ENCODE measurements at regions of chr15 and their contacts with region 1.

Region 1: DNA sequence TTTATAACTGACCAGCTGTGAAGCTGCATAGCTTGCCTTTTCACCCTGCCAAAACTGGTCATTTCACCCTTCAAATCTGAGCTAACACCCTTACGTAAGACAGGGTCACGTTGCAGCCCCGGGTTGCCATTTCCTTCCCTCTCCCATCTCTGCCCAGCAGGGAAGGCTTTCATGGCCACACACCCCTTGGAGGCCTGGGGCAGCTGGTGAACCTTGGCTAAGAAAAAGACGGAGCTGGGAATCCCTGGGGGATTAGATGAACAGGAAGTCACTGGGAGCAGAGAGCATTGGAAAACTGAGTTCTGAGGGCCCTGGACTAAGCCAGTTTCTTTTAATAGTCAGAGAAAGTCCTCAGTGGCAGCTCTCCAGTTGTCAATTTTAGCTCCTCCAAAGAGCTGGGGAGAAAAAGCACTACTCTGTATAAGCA is 67.8 kb downstream of the TTC23 start:
- DNase-seq: peak; percentile 71 to 94
- ATAC-seq: peak; percentile 86 to 95
- H3K4me3 ChIP-seq: no peak overlapping the region
- H3K27ac ChIP-seq: peak overlapping the region; percentile 82 to 90 (median 86)
- H3K4me1 ChIP-seq: peaks cover 46 to 48% of the 10 kb centered on the region in 2 donors
- H3K27me3 ChIP-seq: no peaks in the 10 kb centered on the region
- CTCF ChIP-seq: no peak
- POLR2A ChIP-seq: peak in 1 of 2 donors; percentile 5

Region 2: GRCh38 chr15:99169769-99170311 is 11.7 kb before region 1 on chr15:
- in situ Hi-C with region 1: no loop called
- intact Hi-C with region 1: loop called (anchors 1 kb)
- DNase-seq: peak; percentile 45 to 46
- ATAC-seq: peak; percentile 25 to 37
- H3K4me3 ChIP-seq: no peak overlapping the region
- H3K27ac ChIP-seq: peak overlapping the region; percentile 86 to 95 (median 92)
- H3K4me1 ChIP-seq: peaks cover 73 to 75% of the 10 kb centered on the region in 2 donors
- H3K27me3 ChIP-seq: no peaks in the 10 kb centered on the region
- CTCF ChIP-seq: no peak
- POLR2A ChIP-seq: no peak

Region 3: DNA sequence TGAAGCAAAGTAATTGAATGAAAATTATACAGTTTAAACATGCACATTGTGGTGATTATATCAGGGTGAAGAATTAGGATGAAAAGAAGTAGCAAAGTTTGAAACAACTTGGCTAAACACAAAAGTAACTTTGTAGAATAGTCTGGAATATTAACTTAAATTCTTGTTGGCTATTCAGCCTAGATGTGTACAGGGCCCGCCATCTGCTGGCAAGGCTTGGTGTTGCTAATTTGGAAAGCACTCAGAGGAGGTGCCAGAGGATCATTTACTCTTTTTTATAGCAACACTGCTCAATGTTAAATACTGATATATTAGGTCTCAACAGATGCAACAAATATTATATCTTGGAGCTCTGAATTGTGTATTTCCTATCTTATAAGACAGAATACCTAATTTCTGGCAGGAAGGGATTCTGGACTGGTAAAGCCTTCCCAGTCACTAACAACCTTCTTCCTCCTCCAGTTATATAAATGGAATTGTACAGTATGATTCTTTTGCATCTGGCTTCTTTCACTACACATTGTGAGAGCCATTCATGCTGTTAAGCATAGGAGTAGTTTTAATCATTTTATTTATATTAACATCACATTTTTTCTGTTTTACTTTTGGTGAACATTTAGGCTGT is 31.7 kb after region 1 on chr15:
- in situ Hi-C with region 1: no loop called
- intact Hi-C with region 1: loop called (anchors 2 kb)
- DNase-seq: peak; percentile 68 to 83
- ATAC-seq: peak; percentile 57 to 80
- H3K4me3 ChIP-seq: no peak overlapping the region
- H3K27ac ChIP-seq: peak overlapping the region; percentile 54 to 81 (median 66)
- H3K4me1 ChIP-seq: peaks cover 12 to 40% of the 10 kb centered on the region in 2 donors
- H3K27me3 ChIP-seq: no peaks in the 10 kb centered on the region
- CTCF ChIP-seq: peak; percentile 87 to 96 (median 91)
- POLR2A ChIP-seq: no peak

Region 4: DNA sequence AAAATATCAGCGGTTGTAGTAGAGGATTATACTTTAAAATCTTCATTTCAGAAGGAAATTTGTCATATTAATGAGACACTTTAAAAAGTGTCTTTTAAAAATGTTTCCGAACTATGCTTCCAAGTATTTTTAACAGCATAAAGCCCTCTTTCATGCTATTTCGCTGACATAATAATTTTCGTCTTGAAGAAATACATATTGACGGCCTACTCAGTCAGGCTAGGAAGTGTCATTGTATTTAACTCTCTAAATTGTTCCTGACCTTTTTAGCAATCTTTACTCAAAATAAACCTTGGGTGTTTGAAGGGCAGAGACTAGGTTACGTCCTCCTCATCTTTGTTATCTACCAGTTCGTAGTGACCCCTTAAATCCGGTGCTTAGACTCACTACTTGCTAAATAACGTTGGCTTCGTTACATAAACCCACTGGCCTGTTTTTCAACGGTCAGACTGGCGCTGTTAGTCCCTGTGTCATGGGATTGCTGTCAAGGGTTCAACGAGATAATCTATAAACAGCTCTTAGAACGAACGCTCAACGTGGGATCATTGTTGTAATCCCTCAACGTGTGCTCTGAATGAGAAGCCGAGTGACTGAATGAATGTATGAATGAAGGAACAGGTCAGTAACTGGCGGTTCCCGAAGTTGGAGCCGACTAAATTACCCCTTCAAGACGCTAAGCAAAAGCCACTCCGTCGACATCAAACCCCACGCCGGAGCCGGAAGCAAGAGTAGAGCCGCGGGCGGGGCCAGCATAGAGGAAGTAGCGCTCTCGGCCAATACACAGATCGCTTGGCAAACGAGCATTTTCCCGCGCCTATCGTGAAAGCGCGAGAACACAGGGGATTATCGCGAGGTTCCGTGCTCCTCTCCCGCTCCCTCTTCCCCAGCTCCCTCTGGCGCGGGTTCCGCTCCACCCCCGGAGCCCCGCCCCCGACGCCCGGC is 69.2 kb after region 1 on chr15:
- in situ Hi-C with region 1: no loop called
- intact Hi-C with region 1: loop called (anchors 2 kb)
- DNase-seq: peak; percentile 98 to 99
- ATAC-seq: peak; percentile 94 to 95
- H3K4me3 ChIP-seq: peak overlapping the region; percentile 53 to 89 (median 84)
- H3K27ac ChIP-seq: peak overlapping the region; percentile 93 to 96 (median 96)
- H3K4me1 ChIP-seq: peaks cover 34 to 40% of the 10 kb centered on the region in 2 donors
- H3K27me3 ChIP-seq: no peaks in the 10 kb centered on the region
- CTCF ChIP-seq: no peak
- POLR2A ChIP-seq: peak; percentile 89 to 96

Region 5: DNA sequence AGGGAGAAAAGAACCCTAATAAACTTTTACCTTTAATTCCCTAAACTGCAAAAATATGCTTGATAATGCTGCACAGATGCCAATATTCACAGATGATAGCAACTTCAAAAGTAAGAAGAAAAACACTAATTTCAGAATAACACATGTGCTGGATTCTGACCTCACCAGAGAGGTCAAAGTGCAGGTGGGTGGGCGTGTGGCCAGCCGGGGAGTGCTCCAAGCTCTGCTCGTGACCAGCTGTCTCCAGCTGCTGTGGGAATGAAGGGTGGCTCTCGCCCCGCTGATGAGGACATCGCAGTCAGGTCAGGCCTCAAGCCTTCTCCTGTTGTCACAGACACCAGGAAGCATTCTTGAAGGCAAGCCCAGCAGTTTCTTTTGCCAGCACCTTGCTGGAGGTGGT is 1103.1 kb after region 1 on chr15:
- in situ Hi-C with region 1: no loop called
- intact Hi-C with region 1: no loop called
- DNase-seq: peak; percentile 73 to 81
- ATAC-seq: peak; percentile 77 to 85
- H3K4me3 ChIP-seq: no peak overlapping the region
- H3K27ac ChIP-seq: peak overlapping the region; percentile 26 to 65 (median 56)
- H3K4me1 ChIP-seq: peaks cover 12 to 19% of the 10 kb centered on the region in 2 donors
- H3K27me3 ChIP-seq: no peaks in the 10 kb centered on the region
- CTCF ChIP-seq: no peak
- POLR2A ChIP-seq: no peak